ENCODE measurements at regions of chr16 and their contacts with region 1.

Region 1: DNA sequence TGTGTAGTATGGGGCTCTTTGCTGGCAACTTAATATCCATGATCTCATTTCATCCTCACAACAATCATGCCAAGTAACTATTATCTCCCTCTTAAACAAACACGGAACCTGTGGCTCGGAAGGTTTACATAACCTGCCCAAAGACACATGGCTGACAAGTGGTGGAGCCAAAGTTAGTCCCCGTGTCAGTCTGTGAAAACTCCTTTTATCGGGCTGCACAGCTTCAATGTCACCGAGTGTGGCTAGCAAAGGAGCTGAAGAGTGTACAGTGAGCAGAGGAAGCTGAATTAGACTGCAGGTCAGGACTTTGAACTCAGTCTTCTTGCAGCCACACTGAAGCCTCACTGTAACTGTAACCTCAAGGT is 80.3 kb downstream of the PARN start:
- DNase-seq: peak in 1 of 2 experiments; percentile 66
- ATAC-seq: peak; percentile 63 to 65
- H3K4me3 ChIP-seq: no peak overlapping the region
- H3K27ac ChIP-seq: peak overlapping the region; percentile 68 to 80
- H3K4me1 ChIP-seq: peaks cover 70% of the 10 kb centered on the region
- CTCF ChIP-seq: no peak
- EP300 ChIP-seq: no peak
- POLR2A ChIP-seq: no peak
- RAD21 ChIP-seq: no peak

Region 2: GRCh38 chr16:14489460-14489859 is 60.3 kb before region 1 on chr16:
- CTCF ChIA-PET with region 1: no interaction called
- POLR2A ChIA-PET with region 1: no interaction called
- DNase-seq: peak; percentile 80 to 85
- ATAC-seq: peak; percentile 72 to 79
- H3K4me3 ChIP-seq: no peak overlapping the region
- H3K27ac ChIP-seq: peak overlapping the region; percentile 86 to 90
- H3K4me1 ChIP-seq: peaks cover 78% of the 10 kb centered on the region
- CTCF ChIP-seq: no peak
- EP300 ChIP-seq: no peak
- POLR2A ChIP-seq: no peak
- RAD21 ChIP-seq: peak in 1 of 2 experiments; percentile 21; a peak in 1 of 5 replicates

Region 3: DNA sequence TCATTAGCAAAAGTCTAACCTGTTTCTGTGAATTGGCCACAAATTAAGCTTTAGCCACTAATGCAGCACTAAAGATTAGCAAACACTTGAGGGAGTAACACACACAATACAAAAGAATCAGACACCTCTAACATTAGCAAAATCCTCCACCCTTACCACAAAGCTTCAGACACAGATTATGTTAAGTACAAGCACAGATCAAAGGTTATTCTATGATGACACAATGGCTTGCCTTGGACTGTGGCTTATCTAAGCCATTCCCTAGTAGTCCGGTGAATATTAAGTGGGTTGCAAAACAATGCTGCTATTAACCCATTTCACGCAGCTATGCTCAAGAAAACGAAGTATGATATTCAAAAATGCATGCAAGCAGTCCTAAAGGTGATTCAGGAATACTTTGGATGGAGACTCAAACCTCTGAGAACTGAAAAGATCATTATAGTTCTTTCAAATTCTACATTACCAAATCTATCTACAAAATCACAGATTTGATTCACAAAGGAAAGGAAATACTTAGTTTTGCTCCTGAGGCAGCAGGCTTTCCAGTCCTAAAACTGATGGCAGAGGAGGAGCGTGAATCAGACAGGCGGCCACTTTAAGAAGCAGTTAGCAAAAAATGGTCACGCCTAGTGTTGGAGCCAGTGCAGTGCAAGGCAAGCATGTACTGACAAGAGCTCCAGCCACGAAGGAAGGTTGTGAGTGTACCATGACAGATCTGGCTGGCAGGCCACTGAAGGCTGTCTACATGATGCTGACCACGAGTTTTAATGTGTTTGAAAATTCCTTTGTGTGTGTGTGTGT is 13.1 kb after region 1 on chr16:
- CTCF ChIA-PET with region 1: interaction called, 20 read pairs
- POLR2A ChIA-PET with region 1: no interaction called
- DNase-seq: peak; percentile 53 to 73
- ATAC-seq: peak; percentile 86 to 87
- H3K4me3 ChIP-seq: 0 out of 3 replicates have a peak overlapping the region, but pooled peaks have one; percentile 7
- H3K27ac ChIP-seq: peak overlapping the region; percentile 71 to 78
- H3K4me1 ChIP-seq: peaks cover 80% of the 10 kb centered on the region
- CTCF ChIP-seq: no peak
- EP300 ChIP-seq: no peak
- POLR2A ChIP-seq: no peak
- RAD21 ChIP-seq: no peak

Measured in A549 (cell line).